ENCODE measurements at regions of chr2 and their contacts with region 1.

Region 1: DNA sequence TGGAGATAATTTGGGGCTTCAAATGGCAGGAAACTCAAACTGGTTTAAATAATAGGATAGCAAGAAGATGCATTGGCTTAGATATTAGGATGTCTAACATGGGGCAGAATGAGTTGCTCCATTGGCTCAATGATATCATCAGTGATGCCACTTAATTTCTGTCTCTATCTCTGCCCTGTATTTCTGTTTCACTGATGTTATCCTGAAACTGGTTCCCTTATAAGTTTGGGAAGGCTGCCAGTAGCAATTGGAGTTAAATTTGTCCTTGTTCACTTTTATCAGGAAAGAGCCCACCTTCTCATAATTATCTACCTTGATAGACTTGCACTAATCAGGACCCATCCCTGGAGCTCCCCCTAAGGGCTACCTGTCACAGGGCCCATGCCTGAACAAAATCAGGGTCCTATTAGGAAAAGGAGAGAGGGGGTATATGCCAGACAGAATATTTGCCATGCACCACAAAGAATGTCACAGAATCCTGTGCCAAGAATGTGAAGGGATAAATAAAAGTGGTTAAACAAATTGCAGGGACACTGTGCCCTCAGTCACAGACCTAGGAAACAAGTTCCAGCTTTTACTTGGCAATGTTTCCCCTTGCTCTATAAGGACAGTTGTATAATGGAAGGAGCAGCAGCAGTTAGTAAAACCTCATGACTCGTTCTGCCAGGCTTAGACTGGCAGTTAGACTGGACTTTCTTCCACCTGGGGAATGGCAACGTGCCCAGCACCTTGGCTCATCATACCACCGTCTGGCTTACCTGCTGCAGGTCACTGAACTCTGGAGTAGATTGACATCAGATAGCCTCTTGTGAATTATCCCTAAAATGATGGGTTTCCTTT is 32.4 kb upstream of the VWC2L start:
- DNase-seq: no peak
- H3K4me3 ChIP-seq: no peak overlapping the region
- H3K27ac ChIP-seq: no peak overlapping the region
- H3K4me1 ChIP-seq: no peaks in the 10 kb centered on the region
- H3K27me3 ChIP-seq: no peaks in the 10 kb centered on the region
- CTCF ChIP-seq: no peak
- EP300 ChIP-seq: no peak
- POLR2A ChIP-seq: no peak

Region 2: DNA sequence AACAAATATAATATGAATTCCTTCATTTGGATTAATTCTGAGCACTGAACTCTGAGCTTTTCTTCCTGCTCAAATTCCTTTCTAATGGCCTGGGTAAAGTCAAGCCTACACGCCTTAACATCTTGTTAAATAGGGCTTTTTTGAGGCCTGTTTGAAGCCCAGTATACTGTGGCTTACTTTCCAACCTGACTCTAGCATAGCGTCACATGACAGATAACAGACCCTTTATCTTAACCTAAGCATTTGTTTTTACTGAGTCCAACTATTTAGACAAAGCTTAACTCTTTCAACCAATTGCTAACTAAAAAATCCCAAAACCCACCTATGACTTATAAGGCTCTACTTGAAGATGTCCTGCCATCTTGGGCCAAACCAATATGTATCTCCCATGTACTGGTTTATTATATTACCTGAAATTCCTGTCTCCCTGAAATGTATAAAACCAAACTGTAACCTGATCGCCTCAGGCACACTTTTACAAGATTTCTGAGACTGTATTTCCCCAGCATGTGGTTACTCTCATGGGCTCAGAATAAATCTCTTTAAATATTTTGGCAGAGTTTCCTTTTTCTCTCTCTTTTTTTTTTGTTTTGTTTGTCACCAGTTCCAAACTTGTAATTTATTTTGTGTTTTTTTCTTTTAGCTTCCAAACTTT is 238.7 kb before region 1 on chr2:
- intact Hi-C with region 1: loop called in 1 of 4 experiments (anchors 5 kb)
- DNase-seq: no peak
- H3K4me3 ChIP-seq: no peak overlapping the region
- H3K27ac ChIP-seq: no peak overlapping the region
- H3K4me1 ChIP-seq: no peaks in the 10 kb centered on the region
- H3K27me3 ChIP-seq: no peaks in the 10 kb centered on the region
- CTCF ChIP-seq: no peak
- EP300 ChIP-seq: no peak
- POLR2A ChIP-seq: no peak

Region 3: DNA sequence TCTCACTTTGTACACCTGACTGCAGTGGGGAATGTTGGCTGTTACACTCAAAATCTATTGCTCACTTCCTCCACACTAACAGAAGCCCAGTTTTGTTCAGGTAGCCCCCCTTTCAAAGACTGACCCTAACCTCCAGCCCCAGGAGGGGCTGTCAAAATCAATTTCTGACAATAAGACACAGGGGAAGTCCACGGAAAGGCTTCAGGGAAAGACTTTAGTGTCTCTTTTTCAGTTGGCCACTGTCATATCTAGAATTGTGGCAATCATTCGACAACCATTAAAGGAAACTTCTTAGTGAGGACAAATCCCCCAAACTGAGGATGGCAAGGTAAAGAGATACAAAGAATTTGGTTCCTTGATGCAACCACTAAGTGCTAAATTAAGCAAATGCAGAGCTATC is 372.0 kb after region 1 on chr2:
- intact Hi-C with region 1: no loop called
- DNase-seq: no peak
- H3K4me3 ChIP-seq: no peak overlapping the region
- H3K27ac ChIP-seq: no peak overlapping the region
- H3K4me1 ChIP-seq: no peaks in the 10 kb centered on the region
- H3K27me3 ChIP-seq: no peaks in the 10 kb centered on the region
- CTCF ChIP-seq: no peak
- EP300 ChIP-seq: no peak
- POLR2A ChIP-seq: no peak